ENCODE measurements at regions of chr11 and their contacts with region 1.

Region 1: GRCh38 chr11:82867495-82868082 is 32.6 kb downstream of the PRCP start:
- DNase-seq: peak; percentile 66 to 79 (median 69)
- H3K4me3 ChIP-seq: no peak overlapping the region
- H3K4me3 Mint-ChIP-seq: peak overlapping the region in 6 of 8 donors; percentile 40 to 77 (median 52)
- H3K27ac ChIP-seq: no peak overlapping the region
- H3K27ac Mint-ChIP-seq: peak overlapping the region in 4 of 7 donors; percentile 12 to 85 (median 46)
- H3K4me1 ChIP-seq: peaks cover 5% of the 10 kb centered on the region
- H3K4me1 Mint-ChIP-seq: peaks cover 11 to 24% (median 12%) of the 10 kb centered on the region in 4 donors
- H3K27me3 ChIP-seq: no peaks in the 10 kb centered on the region
- H3K27me3 Mint-ChIP-seq: peaks cover 0 to 2% of the 10 kb centered on the region in 2 donors

Region 2: GRCh38 chr11:82718307-82718706 is 149.3 kb before region 1 on chr11:
- CTCF ChIA-PET with region 1: interaction called, 16 read pairs
- POLR2A ChIA-PET with region 1: no interaction called
- intact Hi-C with region 1: no loop called
- DNase-seq: peak in 2 of 5 donors; percentile 15 to 29
- H3K4me3 ChIP-seq: no peak overlapping the region
- H3K4me3 Mint-ChIP-seq: no peak overlapping the region
- H3K27ac ChIP-seq: no peak overlapping the region
- H3K27ac Mint-ChIP-seq: no peak overlapping the region
- H3K4me1 ChIP-seq: no peaks in the 10 kb centered on the region
- H3K4me1 Mint-ChIP-seq: no peaks in the 10 kb centered on the region
- H3K27me3 ChIP-seq: no peaks in the 10 kb centered on the region
- H3K27me3 Mint-ChIP-seq: peaks cover under 1 to 2% of the 10 kb centered on the region in 2 donors

Region 3: GRCh38 chr11:82747471-82747870 is 120.1 kb before region 1 on chr11:
- CTCF ChIA-PET with region 1: no interaction called
- POLR2A ChIA-PET with region 1: no interaction called
- intact Hi-C with region 1: no loop called
- DNase-seq: no peak
- H3K4me3 ChIP-seq: no peak overlapping the region
- H3K4me3 Mint-ChIP-seq: no peak overlapping the region
- H3K27ac ChIP-seq: no peak overlapping the region
- H3K27ac Mint-ChIP-seq: no peak overlapping the region
- H3K4me1 ChIP-seq: peaks cover 20% of the 10 kb centered on the region
- H3K4me1 Mint-ChIP-seq: peaks cover 15 to 23% (median 19%) of the 10 kb centered on the region in 4 donors
- H3K27me3 ChIP-seq: no peaks in the 10 kb centered on the region
- H3K27me3 Mint-ChIP-seq: peaks cover 4 to 5% of the 10 kb centered on the region in 2 donors

Region 4: GRCh38 chr11:82854242-82854641 is 13.3 kb before region 1 on chr11:
- CTCF ChIA-PET with region 1: interaction called, 33 read pairs
- POLR2A ChIA-PET with region 1: interaction called, 4 read pairs
- intact Hi-C with region 1: no loop called
- DNase-seq: no peak
- H3K4me3 ChIP-seq: no peak overlapping the region
- H3K4me3 Mint-ChIP-seq: no peak overlapping the region
- H3K27ac ChIP-seq: no peak overlapping the region
- H3K27ac Mint-ChIP-seq: peak overlapping the region in 1 of 7 donors; percentile 24
- H3K4me1 ChIP-seq: no peaks in the 10 kb centered on the region
- H3K4me1 Mint-ChIP-seq: peaks cover 0 to 5% (median 2%) of the 10 kb centered on the region in 4 donors
- H3K27me3 ChIP-seq: no peaks in the 10 kb centered on the region
- H3K27me3 Mint-ChIP-seq: no peaks in the 10 kb centered on the region

Region 5: DNA sequence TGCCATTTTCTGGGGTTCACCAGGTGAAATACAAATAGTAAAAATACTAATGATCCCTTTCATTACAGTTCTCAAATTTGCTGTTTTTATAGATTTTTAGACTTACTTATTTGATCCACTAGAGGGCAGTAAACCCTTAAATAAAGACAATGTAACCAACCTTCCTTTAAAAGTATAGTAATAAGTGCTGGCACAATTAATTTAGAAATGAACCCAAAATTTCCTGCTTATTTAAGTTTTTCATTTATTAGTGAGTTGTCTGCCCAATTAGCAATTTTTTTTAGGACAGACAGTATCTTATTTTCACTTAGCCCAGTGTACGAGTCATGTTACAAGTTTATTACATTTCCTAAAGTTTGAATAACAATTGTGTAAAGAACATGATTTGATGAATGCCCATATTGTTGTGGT is 38.7 kb after region 1 on chr11:
- CTCF ChIA-PET with region 1: interaction called, 107 read pairs
- POLR2A ChIA-PET with region 1: interaction called, 6 read pairs
- intact Hi-C with region 1: loop called (anchors 1 kb)
- DNase-seq: peak in 4 of 5 donors; percentile 45 to 51 (median 48)
- H3K4me3 ChIP-seq: no peak overlapping the region
- H3K4me3 Mint-ChIP-seq: no peak overlapping the region
- H3K27ac ChIP-seq: no peak overlapping the region
- H3K27ac Mint-ChIP-seq: no peak overlapping the region
- H3K4me1 ChIP-seq: peaks cover 18% of the 10 kb centered on the region
- H3K4me1 Mint-ChIP-seq: peaks cover 11 to 22% (median 16%) of the 10 kb centered on the region in 4 donors
- H3K27me3 ChIP-seq: no peaks in the 10 kb centered on the region
- H3K27me3 Mint-ChIP-seq: no peaks in the 10 kb centered on the region

Region 6: DNA sequence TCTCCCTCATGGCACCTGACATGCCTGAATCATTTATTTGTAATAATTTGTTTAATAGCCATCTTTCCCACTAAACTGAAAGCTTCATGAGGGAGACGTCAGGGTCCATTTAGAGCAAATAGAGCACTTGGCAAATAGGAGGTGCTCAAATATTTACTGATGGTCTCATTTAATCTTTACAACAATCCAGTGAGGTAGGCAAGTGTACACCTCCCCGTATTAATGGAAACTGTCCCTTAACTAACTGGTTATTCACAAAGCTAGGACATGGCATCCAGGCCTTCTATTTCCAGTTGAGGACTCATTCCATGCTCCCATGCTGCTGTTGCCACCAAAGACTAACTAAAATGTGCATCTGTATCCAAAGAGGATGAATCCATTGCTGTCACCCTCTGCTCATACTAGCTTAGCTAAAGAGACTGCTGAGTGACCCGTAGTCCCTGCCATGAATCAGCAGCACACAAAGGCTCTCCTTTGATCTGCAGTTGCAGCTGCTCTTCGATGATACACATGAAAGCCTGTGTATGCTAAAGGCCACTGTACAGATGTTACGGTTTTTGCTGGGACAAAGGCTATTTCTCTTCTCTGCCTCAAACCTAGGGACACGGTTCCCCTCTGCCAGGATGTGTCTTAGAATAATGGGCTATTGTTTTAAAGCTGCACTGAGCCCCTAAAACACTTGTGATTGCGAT is 121.5 kb after region 1 on chr11:
- CTCF ChIA-PET with region 1: interaction called, 11 read pairs
- POLR2A ChIA-PET with region 1: no interaction called
- intact Hi-C with region 1: loop called (anchors 1 kb)
- DNase-seq: no peak
- H3K4me3 ChIP-seq: no peak overlapping the region
- H3K4me3 Mint-ChIP-seq: no peak overlapping the region
- H3K27ac ChIP-seq: no peak overlapping the region
- H3K27ac Mint-ChIP-seq: peak overlapping the region in 2 of 7 donors; percentile 14 to 21
- H3K4me1 ChIP-seq: no peaks in the 10 kb centered on the region
- H3K4me1 Mint-ChIP-seq: peaks cover 0 to 6% (median under 1%) of the 10 kb centered on the region in 4 donors
- H3K27me3 ChIP-seq: no peaks in the 10 kb centered on the region
- H3K27me3 Mint-ChIP-seq: no peaks in the 10 kb centered on the region

Region 7: GRCh38 chr11:83292709-83293456 is 425.3 kb after region 1 on chr11:
- CTCF ChIA-PET with region 1: interaction called, 18 read pairs
- POLR2A ChIA-PET with region 1: no interaction called
- intact Hi-C with region 1: no loop called
- DNase-seq: peak in 4 of 5 donors; percentile 26 to 45 (median 28)
- H3K4me3 ChIP-seq: no peak overlapping the region
- H3K4me3 Mint-ChIP-seq: peak overlapping the region in 6 of 8 donors; percentile 12 to 69 (median 44)
- H3K27ac ChIP-seq: no peak overlapping the region
- H3K27ac Mint-ChIP-seq: peak overlapping the region in 2 of 7 donors; percentile 35 to 41
- H3K4me1 ChIP-seq: no peaks in the 10 kb centered on the region
- H3K4me1 Mint-ChIP-seq: peaks cover 3 to 5% (median 4%) of the 10 kb centered on the region in 4 donors
- H3K27me3 ChIP-seq: no peaks in the 10 kb centered on the region
- H3K27me3 Mint-ChIP-seq: peaks cover 7 to 12% of the 10 kb centered on the region in 2 donors

Measured in CD4-positive, alpha-beta memory T cell (primary cell).